Activated CD4-positive, alpha-beta T cell treated with anti-CD3 and anti-CD28 coated beads for 36 hours (primary cell): ENCODE measurements at regions of chr20 and their contacts with region 1.

Region 1: GRCh38 chr20:62500237-62500864 is 24.6 kb upstream of the GATA5 start:
- DNase-seq: peak; percentile 91
- ATAC-seq: peak; percentile 14
- H3K4me3 Mint-ChIP-seq: no peak overlapping the region
- H3K27ac Mint-ChIP-seq: peak overlapping the region; percentile 82
- H3K4me1 Mint-ChIP-seq: peaks cover 32% of the 10 kb centered on the region
- H3K27me3 Mint-ChIP-seq: peaks cover 1% of the 10 kb centered on the region

Region 2: DNA sequence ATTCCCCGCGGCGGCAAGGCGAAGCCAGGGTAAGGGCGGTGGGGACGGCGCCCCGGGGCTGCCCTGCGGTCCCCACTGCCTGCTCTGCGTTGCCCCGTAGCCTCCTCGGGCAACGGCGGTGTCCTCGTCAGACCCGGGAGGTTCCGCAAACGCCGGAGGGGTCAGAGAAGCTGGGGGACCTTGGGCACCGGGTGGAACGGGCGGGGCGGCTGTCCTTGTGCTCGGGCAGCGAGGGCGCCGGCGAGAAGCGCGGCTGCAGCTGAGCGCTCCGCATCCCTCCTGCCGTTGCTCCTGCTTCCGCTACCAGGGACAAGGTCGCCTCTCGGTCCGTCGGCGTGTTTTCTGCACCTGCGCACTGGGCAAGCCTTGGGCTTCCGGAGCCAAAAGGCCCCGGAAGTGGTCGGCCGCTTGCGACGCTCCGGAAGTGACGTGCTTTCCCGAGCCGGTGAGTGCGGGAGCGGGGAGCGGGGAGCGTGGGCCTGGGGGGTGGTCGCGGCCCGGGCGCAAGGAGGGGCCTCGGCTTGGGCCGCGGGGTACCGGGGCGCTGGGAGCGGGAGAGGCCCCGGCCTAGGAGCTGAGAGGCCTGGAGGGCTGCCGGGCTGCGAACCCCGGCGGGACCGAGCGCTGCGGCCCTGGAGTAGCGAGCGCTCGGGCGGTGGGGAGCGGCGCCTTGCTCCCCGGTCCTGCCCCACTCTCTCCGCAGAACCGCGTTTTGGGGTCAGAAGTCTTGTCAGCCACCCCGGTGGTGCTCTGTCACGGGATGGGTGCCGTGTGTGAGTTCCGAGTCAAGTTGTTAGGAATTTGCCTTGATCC is 317.5 kb before region 1 on chr20 and contains the start of gene MTG2:
- CTCF ChIA-PET with region 1: no interaction called
- POLR2A ChIA-PET with region 1: no interaction called
- intact Hi-C with region 1: loop called in 1 of 2 experiments (anchors 5 kb)
- DNase-seq: peak; percentile 97
- ATAC-seq: peak; percentile 99
- H3K4me3 Mint-ChIP-seq: peak within 1 kb of the TSS; percentile 88
- H3K27ac Mint-ChIP-seq: peak within 1 kb of the TSS; percentile 87
- H3K4me1 Mint-ChIP-seq: peaks cover 39% of the 10 kb centered on the region
- H3K27me3 Mint-ChIP-seq: no peaks in the 10 kb centered on the region
- total RNA-seq, gene MTG2: 38.0 to 44.9 TPM

Region 3: GRCh38 chr20:62523473-62524203 is 23.3 kb after region 1 on chr20:
- CTCF ChIA-PET with region 1: interaction called, 3 read pairs
- POLR2A ChIA-PET with region 1: no interaction called
- intact Hi-C with region 1: loop called in 1 of 2 experiments (anchors 1 kb)
- DNase-seq: peak; percentile 92
- ATAC-seq: peak; percentile 99
- H3K4me3 Mint-ChIP-seq: no peak overlapping the region
- H3K27ac Mint-ChIP-seq: peak overlapping the region; percentile 47
- H3K4me1 Mint-ChIP-seq: peaks cover 14% of the 10 kb centered on the region
- H3K27me3 Mint-ChIP-seq: peaks cover 7% of the 10 kb centered on the region

Region 4: GRCh38 chr20:62623488-62624324 is 123.4 kb after region 1 on chr20:
- CTCF ChIA-PET with region 1: interaction called, 19 read pairs
- POLR2A ChIA-PET with region 1: no interaction called
- intact Hi-C with region 1: loop called (anchors 1 kb)
- DNase-seq: peak; percentile 97
- ATAC-seq: peak; percentile 91
- H3K4me3 Mint-ChIP-seq: peak overlapping the region; percentile 69
- H3K27ac Mint-ChIP-seq: peak overlapping the region; percentile 96
- H3K4me1 Mint-ChIP-seq: peaks cover 26% of the 10 kb centered on the region
- H3K27me3 Mint-ChIP-seq: no peaks in the 10 kb centered on the region

Region 5: DNA sequence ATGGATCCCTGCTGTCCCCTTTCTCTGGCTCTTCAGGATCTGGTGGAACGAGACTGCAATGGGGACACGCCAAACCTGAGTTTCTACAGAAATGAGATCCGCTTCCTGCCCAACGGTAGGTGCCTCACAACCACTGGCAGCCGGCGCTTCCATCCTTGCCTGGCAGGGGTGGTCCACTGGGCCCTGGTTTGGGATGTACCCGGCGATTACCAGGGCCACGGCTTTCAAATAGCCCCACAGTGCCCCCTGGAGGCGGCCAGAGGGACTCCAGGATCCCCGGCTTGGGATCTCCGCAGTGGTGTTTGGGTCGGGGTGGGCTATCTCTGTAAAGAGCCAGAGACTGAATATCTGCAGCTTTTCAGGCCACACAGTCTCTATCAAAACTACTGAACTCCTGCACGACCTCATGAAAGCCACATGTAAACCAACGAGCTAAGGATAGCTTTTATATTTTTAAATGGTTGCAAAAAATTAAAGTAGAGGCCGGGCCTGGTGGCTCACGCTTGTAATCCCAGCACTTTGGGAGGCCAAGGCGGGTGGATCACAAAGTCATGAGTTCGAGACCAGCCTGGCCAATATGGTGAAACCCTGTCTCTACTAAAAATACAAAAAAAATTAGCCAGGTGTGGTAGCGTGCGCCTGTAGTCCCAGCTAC is 308.0 kb after region 1 on chr20:
- CTCF ChIA-PET with region 1: interaction called, 4 read pairs
- POLR2A ChIA-PET with region 1: no interaction called
- intact Hi-C with region 1: loop called (anchors 1 to 5 kb)
- DNase-seq: peak; percentile 86
- ATAC-seq: peak; percentile 67
- H3K4me3 Mint-ChIP-seq: no peak overlapping the region
- H3K27ac Mint-ChIP-seq: no peak overlapping the region
- H3K4me1 Mint-ChIP-seq: peaks cover 21% of the 10 kb centered on the region
- H3K27me3 Mint-ChIP-seq: no peaks in the 10 kb centered on the region